ENCODE measurements at regions of chr13 and their contacts with region 1.

Region 1: GRCh38 chr13:24512197-24512907 is at the start of gene PARP4:
- DNase-seq: peak; percentile 81
- ATAC-seq: peak; percentile 70
- H3K4me3 Mint-ChIP-seq: peak within 1 kb of the TSS; percentile 74
- H3K27ac Mint-ChIP-seq: peak within 1 kb of the TSS; percentile 86
- H3K4me1 Mint-ChIP-seq: peaks cover 37% of the 10 kb centered on the region
- H3K27me3 Mint-ChIP-seq: peaks cover 6% of the 10 kb centered on the region
- total RNA-seq, gene PARP4: 24.6 to 29.1 TPM

Region 2: GRCh38 chr13:23888658-23889614 is 623.4 kb before region 1 on chr13 and contains the start of gene MIPEP:
- CTCF ChIA-PET with region 1: no interaction called
- POLR2A ChIA-PET with region 1: no interaction called
- intact Hi-C with region 1: loop called in 1 of 2 experiments (anchors 2 kb)
- DNase-seq: peak; percentile 94
- ATAC-seq: peak; percentile 90
- H3K4me3 Mint-ChIP-seq: peak within 1 kb of the TSS; percentile 79
- H3K27ac Mint-ChIP-seq: peak within 1 kb of the TSS; percentile 75
- H3K4me1 Mint-ChIP-seq: peaks cover 23% of the 10 kb centered on the region
- H3K27me3 Mint-ChIP-seq: no peaks in the 10 kb centered on the region
- total RNA-seq, gene MIPEP: 13.2 to 15.5 TPM

Region 3: DNA sequence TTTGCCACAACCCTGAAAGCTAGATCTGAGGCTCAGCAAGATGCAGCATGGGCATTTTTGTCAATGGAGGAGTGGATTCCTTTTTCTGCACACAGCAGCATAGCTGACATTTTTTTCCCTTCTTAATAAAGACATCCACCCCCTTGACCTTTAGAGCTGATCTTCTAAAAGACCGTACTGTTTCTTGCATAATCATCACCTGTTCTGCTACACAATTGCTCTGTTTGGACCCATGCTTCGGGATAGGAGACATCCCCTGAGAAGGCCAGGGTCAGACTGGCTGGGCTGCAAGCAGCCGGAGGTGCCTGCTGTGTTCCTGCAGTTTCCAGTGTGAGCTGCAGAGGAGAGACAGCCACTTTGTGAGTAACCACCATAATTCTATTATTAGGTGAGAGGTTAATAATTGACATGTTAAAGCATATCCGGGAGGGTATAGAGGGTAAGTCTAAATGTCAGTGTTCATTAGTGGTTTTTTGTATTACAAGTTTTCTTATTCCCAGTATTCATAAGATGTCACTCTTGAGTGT is 506.5 kb before region 1 on chr13:
- CTCF ChIA-PET with region 1: no interaction called
- POLR2A ChIA-PET with region 1: no interaction called
- intact Hi-C with region 1: no loop called
- DNase-seq: no peak
- ATAC-seq: no peak
- H3K4me3 Mint-ChIP-seq: no peak overlapping the region
- H3K27ac Mint-ChIP-seq: no peak overlapping the region
- H3K4me1 Mint-ChIP-seq: no peaks in the 10 kb centered on the region
- H3K27me3 Mint-ChIP-seq: peaks cover 2% of the 10 kb centered on the region

Region 4: DNA sequence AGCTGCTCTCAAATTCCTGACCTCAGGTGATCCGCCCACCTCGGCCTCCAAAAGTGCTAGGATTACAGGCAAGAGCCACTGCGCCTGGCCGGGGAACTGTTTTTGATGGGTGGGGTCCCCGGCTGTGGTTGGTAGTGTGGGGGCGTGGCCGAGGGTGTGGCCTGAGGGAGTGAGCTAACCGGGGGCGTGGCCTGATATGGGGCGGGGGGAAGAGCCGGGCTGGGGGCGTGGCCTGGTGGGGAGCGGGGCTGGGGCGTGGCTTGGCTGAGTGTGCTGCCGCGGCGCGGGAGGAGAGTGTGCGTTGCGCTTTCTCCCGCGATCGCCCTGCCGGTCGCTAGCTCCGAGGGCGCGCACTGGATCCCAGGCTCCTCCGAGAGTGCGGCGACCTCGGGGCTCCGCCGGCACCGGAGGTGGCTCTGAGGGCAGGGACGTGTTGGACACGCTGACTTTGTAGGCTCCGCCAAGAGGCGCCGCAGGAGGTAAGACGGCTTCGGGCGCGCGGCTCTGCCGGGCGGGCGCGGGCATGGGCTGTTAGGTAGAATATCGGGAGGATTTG is 351.8 kb before region 1 on chr13 and contains the start of gene SPATA13:
- CTCF ChIA-PET with region 1: no interaction called
- POLR2A ChIA-PET with region 1: no interaction called
- intact Hi-C with region 1: loop called in 1 of 2 experiments (anchors 5 kb)
- DNase-seq: peak; percentile 97
- ATAC-seq: peak; percentile 95
- H3K4me3 Mint-ChIP-seq: peak within 1 kb of the TSS; percentile 83
- H3K27ac Mint-ChIP-seq: no peak within 1 kb of the TSS
- H3K4me1 Mint-ChIP-seq: peaks cover 12% of the 10 kb centered on the region
- H3K27me3 Mint-ChIP-seq: peaks cover 9% of the 10 kb centered on the region
- total RNA-seq, gene SPATA13: 47.6 to 51.5 TPM

Region 5: GRCh38 chr13:24270639-24271141 is 241.7 kb before region 1 on chr13:
- CTCF ChIA-PET with region 1: interaction called, 3 read pairs
- POLR2A ChIA-PET with region 1: no interaction called
- intact Hi-C with region 1: loop called (anchors 1 to 2 kb)
- DNase-seq: peak; percentile 80
- ATAC-seq: peak; percentile 37
- H3K4me3 Mint-ChIP-seq: peak overlapping the region; percentile 87
- H3K27ac Mint-ChIP-seq: peak overlapping the region; percentile 97
- H3K4me1 Mint-ChIP-seq: peaks cover 85% of the 10 kb centered on the region
- H3K27me3 Mint-ChIP-seq: no peaks in the 10 kb centered on the region

Region 6: GRCh38 chr13:24574847-24575246 is 62.5 kb after region 1 on chr13:
- CTCF ChIA-PET with region 1: no interaction called
- POLR2A ChIA-PET with region 1: no interaction called
- intact Hi-C with region 1: loop called in 1 of 2 experiments (anchors 2 kb)
- DNase-seq: no peak
- ATAC-seq: peak; percentile 80
- H3K4me3 Mint-ChIP-seq: no peak overlapping the region
- H3K27ac Mint-ChIP-seq: no peak overlapping the region
- H3K4me1 Mint-ChIP-seq: peaks cover 16% of the 10 kb centered on the region
- H3K27me3 Mint-ChIP-seq: peaks cover 5% of the 10 kb centered on the region

Region 7: DNA sequence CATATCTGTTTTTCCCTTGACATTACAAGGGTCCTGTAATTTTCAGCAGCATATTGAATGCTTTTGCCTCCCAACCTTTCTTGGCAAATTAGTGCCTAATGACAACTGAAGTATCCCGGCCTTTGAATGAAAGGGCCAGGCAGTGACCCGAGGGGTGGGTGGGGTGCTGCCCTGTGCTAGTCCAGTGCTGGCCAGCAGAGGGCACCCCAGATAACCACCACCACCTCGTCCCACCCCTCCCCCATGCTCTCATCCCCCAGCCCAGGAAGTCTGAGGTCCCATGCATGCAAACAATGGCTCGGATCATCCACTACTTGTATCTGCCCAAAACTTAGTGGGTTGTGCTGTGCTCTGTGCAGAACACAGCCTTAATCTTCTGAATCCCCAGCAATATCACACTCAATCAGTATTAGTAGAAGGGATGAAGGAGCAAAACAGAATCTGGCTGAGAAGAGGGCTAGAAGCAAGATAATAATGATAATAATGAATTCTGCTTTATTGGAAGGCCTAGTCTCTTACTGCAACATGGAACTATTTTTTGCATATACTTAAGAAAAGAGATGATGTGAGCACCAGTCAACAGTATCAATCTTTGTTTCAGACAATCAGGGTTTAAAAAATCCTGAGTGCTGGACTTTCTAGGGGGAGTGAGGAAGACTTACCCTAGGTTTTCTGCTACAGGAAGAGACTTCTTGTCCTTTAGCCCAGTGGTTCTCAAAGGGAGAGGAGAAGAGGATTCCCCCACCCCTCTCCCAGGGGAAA is 171.7 kb after region 1 on chr13:
- CTCF ChIA-PET with region 1: no interaction called
- POLR2A ChIA-PET with region 1: no interaction called
- intact Hi-C with region 1: loop called (anchors 5 to 10 kb)
- DNase-seq: peak; percentile 83
- ATAC-seq: peak; percentile 76
- H3K4me3 Mint-ChIP-seq: no peak overlapping the region
- H3K27ac Mint-ChIP-seq: no peak overlapping the region
- H3K4me1 Mint-ChIP-seq: peaks cover 33% of the 10 kb centered on the region
- H3K27me3 Mint-ChIP-seq: peaks cover 46% of the 10 kb centered on the region

Region 8: DNA sequence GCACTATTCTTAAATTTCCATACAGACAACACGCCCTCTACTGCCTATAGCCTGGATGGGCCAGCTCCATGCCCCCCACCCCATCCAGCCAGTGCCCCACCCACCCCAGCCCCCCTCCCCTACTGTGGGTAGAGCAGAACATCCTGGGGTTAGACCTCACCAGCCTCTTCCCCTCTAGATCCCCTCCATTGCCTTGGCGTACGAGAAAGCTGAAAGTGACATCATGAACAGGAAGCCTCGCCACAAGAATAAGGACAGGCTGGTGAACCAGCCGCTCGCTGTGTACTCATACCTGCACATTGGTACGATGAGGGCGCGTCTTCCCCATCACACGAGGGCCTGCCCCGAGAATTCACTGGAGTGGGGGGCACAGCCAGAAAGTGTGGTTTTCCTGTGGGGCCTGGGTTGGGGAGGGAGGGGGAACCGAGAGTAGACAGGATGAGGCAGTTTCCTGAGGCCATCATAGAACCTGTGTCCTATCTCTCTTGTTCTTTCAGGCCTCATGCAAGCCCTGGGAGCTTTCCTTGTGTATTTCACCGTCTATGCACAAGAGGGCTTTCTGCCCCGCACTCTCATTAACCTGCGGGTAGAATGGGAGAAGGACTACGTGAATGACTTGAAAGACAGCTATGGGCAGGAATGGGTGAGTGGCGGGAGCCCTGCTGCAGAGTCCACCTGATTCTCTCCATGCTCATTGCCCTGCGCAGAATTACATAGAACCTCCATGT is 197.0 kb after region 1 on chr13:
- CTCF ChIA-PET with region 1: no interaction called
- POLR2A ChIA-PET with region 1: no interaction called
- intact Hi-C with region 1: no loop called
- DNase-seq: peak; percentile 84
- ATAC-seq: peak; percentile 98
- H3K4me3 Mint-ChIP-seq: peak overlapping the region; percentile 10
- H3K27ac Mint-ChIP-seq: peak overlapping the region; percentile 75
- H3K4me1 Mint-ChIP-seq: peaks cover 25% of the 10 kb centered on the region
- H3K27me3 Mint-ChIP-seq: peaks cover 3% of the 10 kb centered on the region

Region 9: GRCh38 chr13:25301347-25302047 is 789.1 kb after region 1 on chr13 and contains the start of gene NUP58:
- CTCF ChIA-PET with region 1: no interaction called
- POLR2A ChIA-PET with region 1: no interaction called
- intact Hi-C with region 1: loop called in 1 of 2 experiments (anchors 10 kb)
- DNase-seq: peak; percentile 97
- ATAC-seq: peak; percentile 98
- H3K4me3 Mint-ChIP-seq: peak within 1 kb of the TSS; percentile 94
- H3K27ac Mint-ChIP-seq: peak within 1 kb of the TSS; percentile 95
- H3K4me1 Mint-ChIP-seq: peaks cover 30% of the 10 kb centered on the region
- H3K27me3 Mint-ChIP-seq: peaks cover 4% of the 10 kb centered on the region
- total RNA-seq, gene NUP58: 134 to 137 TPM

Measured in activated CD4-positive, alpha-beta T cell treated with anti-CD3 and anti-CD28 coated beads for 36 hours (primary cell).